WTC11 (cell line): ENCODE measurements at regions of chr16 and their contacts with region 1.

Region 1: DNA sequence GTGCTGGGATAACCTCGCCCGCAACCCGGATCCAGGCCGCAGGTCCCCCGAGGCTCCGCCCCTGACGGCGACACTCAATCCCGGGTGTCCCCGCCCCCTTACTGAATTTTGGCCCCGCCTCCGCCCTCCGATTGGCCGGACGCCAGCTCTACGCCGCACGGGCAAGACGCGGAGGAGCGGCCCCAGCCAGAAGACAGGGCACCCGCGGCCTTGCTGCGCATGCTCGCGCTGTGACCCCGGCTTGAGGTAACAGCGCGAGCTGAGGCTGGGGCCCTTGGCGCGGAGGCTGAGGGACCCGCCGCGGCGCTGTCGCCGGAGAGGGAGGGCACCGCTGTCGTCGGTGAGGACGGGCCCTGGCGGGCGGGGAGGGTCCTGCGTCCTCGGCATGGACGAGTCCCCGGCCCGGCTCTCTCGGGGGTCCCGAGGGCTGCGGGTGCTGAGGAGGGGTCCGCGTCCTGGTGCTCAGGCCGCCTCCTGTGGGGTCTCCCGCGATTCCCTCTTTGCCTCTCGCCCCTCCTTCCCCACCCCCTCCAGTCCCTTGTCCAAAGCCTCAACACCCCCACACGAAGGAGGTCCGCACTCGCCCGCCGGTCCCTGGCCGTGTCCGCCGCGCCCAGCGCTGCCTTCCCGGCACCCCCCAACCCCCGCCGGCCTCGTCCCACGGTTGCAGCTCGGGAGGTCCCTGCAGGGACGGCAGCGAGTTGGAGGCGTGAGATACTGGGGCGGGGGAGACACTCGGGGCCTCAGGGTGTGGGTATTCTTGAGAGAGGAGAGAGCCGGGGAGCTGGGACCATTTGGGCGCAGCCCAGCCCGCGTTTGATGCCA is at the start of gene FLYWCH2:
- DNase-seq: peak; percentile 100
- ATAC-seq: peak; percentile 87
- H3K4me3 Mint-ChIP-seq: peak within 1 kb of the TSS; percentile 83
- H3K27ac Mint-ChIP-seq: peak within 1 kb of the TSS; percentile 82
- H3K4me1 Mint-ChIP-seq: peaks cover 6% of the 10 kb centered on the region
- H3K27me3 Mint-ChIP-seq: peaks cover 40% of the 10 kb centered on the region
- CTCF ChIP-seq: no peak
- total RNA-seq, gene FLYWCH2: 19.7 to 25.0 TPM (median 20.7 TPM) in 3 replicates

Region 2: DNA sequence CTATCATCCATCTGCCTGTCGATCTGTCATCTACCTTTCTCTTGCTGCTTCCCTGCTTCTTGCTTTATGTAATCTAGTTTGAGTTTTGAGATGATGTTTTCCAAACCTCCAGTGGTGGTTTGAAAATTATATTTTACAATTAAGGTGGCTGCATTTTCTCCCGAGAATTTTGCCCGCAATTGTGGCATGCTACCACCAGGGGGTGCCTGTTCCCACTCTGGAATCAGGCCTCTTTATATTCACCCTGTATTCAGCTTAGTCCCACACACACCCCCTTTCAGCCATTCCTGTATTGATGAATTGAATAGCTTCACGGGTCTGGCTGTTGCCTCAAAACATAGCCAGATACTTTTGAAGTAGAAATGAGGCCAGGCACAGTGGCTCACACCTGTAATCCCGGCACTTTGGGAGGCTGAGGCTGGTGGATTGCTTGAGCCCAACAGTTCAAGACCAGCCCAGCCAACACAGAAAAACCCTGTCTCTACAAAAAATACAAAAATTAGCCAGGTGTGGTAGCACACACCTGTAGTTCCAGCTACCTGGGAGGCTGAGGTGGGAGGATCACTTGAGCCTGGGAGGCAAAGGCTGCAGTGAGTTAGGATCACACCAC is 28.4 kb before region 1 on chr16:
- CTCF ChIA-PET with region 1: interaction called, 12 read pairs
- POLR2A ChIA-PET with region 1: no interaction called
- DNase-seq: peak; percentile 65
- ATAC-seq: no peak
- H3K4me3 Mint-ChIP-seq: no peak overlapping the region
- H3K27ac Mint-ChIP-seq: no peak overlapping the region
- H3K4me1 Mint-ChIP-seq: peaks cover 5% of the 10 kb centered on the region
- H3K27me3 Mint-ChIP-seq: peaks cover 26% of the 10 kb centered on the region
- CTCF ChIP-seq: peak; percentile 76

Region 3: GRCh38 chr16:2905431-2906387 is 22.5 kb after region 1 on chr16:
- CTCF ChIA-PET with region 1: interaction called, 35 read pairs
- POLR2A ChIA-PET with region 1: interaction called, 13 read pairs
- DNase-seq: peak; percentile 100
- ATAC-seq: peak; percentile 82
- H3K4me3 Mint-ChIP-seq: peak overlapping the region; percentile 97
- H3K27ac Mint-ChIP-seq: peak overlapping the region; percentile 91
- H3K4me1 Mint-ChIP-seq: peaks cover 17% of the 10 kb centered on the region
- H3K27me3 Mint-ChIP-seq: peaks cover 18% of the 10 kb centered on the region
- CTCF ChIP-seq: no peak

Region 4: GRCh38 chr16:2911580-2912329 is 28.5 kb after region 1 on chr16 and contains the start of gene FLYWCH1:
- CTCF ChIA-PET with region 1: interaction called, 35 read pairs
- POLR2A ChIA-PET with region 1: interaction called, 5 read pairs
- DNase-seq: peak; percentile 99
- ATAC-seq: peak; percentile 98
- H3K4me3 Mint-ChIP-seq: peak within 1 kb of the TSS; percentile 86
- H3K27ac Mint-ChIP-seq: peak within 1 kb of the TSS; percentile 83
- H3K4me1 Mint-ChIP-seq: peaks cover 14% of the 10 kb centered on the region
- H3K27me3 Mint-ChIP-seq: peaks cover 37% of the 10 kb centered on the region
- CTCF ChIP-seq: no peak
- total RNA-seq, gene FLYWCH1: 27.2 to 34.2 TPM (median 32.6 TPM) in 3 replicates

Region 5: DNA sequence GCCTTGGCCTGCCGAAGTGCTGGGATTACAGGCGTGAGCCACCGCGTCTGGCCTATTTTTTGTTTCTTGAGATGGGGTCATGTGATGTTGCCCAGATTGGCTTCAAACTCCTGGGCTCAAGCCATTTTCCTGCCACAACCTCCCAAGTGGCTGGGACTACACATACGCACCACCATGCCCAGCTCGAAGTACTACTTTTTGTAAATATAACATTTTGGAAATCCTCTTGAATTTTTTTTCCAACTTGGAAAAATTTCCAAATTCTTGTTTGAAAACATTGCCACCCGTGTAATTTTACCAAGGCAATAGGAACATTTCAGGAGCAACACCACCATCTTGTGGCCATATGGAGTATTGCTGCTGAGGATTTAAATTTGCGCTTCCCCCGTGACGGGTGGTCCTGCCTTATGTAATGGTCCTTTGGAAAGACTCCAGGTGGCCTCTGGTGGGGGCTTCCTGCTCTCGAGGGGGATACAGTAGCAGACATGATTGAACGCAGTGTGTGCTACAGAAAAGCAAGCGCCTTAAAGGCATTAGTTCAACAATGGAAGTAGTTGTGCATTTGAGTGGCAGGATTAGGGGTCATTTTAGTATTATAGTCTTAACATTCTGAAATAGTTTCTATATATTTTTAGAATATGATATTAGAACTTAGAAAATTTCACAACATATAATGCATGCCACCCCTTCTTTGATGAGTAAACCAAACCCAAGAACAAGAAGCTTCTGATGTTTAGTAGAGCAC is 36.4 kb after region 1 on chr16:
- CTCF ChIA-PET with region 1: interaction called, 14 read pairs
- POLR2A ChIA-PET with region 1: no interaction called
- DNase-seq: peak; percentile 73
- ATAC-seq: peak; percentile 50; the same call in 1 of the 2 replicates
- H3K4me3 Mint-ChIP-seq: no peak overlapping the region
- H3K27ac Mint-ChIP-seq: peak overlapping the region; percentile 72; the same call in 1 of the 2 replicates
- H3K4me1 Mint-ChIP-seq: no peaks in the 10 kb centered on the region; the same call in 1 of the 2 replicates
- H3K27me3 Mint-ChIP-seq: no peaks in the 10 kb centered on the region
- CTCF ChIP-seq: peak; percentile 93